ENCODE measurements at regions of chr16 and their contacts with region 1.

Region 1: GRCh38 chr16:31073968-31074813 is at the starts of genes ZNF646 and ZNF668:
- DNase-seq: peak; percentile 98
- H3K4me3 Mint-ChIP-seq: peak within 1 kb of the TSS; percentile 97
- H3K27ac Mint-ChIP-seq: peak within 1 kb of the TSS; percentile 97
- H3K4me1 Mint-ChIP-seq: peaks cover 24% of the 10 kb centered on the region
- H3K27me3 Mint-ChIP-seq: no peaks in the 10 kb centered on the region
- CTCF ChIP-seq: no peak
- total RNA-seq, gene ZNF646: 12.6 and 15.2 TPM in 2 replicates
- total RNA-seq, gene ZNF668: 11.9 and 15.1 TPM in 2 replicates

Region 2: DNA sequence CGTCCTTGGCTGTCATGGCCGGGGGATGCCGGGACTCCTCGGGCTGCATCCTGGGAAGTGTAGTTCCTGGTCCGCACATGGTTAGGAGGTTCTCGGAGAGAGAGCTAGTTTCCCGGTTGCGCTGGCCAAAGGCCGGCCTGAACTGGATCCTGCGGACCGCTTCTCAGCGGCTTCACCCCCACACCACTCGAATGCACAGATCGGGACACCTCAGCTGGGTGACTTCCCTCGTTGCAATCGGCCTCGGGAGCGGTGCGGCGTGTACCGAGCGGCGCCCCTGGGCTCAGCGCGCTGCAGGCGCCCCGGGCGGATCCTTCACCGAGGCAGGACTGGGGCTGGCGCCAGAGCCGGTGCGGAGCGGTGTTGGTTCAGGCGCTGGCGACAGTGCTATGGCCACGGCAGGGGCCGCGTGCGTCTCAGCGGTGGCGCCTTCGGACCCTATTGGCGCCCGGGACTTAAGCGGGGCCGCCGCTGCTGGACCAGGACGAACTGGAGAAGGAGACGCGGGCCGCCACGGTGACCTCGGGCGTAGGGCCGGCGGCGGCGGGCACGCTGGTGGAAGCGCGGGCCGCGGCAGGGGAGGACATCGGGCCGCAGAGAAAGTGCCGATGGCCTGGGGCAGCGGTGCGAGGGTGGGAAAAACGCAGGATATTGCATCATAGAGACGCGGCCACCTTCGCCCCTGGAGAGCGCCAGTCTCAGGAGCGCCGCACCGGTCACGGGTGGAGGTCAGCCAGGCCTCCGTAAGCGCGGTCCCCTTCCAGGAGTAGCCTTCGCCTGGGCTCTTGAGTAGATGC is 298.6 kb before region 1 on chr16:
- CTCF ChIA-PET with region 1: no interaction called
- POLR2A ChIA-PET with region 1: no interaction called
- intact Hi-C with region 1: no loop called
- DNase-seq: peak; percentile 87
- H3K4me3 Mint-ChIP-seq: peak overlapping the region; percentile 85
- H3K27ac Mint-ChIP-seq: peak overlapping the region; percentile 82
- H3K4me1 Mint-ChIP-seq: peaks cover 22% of the 10 kb centered on the region
- H3K27me3 Mint-ChIP-seq: no peaks in the 10 kb centered on the region
- CTCF ChIP-seq: no peak

Region 3: DNA sequence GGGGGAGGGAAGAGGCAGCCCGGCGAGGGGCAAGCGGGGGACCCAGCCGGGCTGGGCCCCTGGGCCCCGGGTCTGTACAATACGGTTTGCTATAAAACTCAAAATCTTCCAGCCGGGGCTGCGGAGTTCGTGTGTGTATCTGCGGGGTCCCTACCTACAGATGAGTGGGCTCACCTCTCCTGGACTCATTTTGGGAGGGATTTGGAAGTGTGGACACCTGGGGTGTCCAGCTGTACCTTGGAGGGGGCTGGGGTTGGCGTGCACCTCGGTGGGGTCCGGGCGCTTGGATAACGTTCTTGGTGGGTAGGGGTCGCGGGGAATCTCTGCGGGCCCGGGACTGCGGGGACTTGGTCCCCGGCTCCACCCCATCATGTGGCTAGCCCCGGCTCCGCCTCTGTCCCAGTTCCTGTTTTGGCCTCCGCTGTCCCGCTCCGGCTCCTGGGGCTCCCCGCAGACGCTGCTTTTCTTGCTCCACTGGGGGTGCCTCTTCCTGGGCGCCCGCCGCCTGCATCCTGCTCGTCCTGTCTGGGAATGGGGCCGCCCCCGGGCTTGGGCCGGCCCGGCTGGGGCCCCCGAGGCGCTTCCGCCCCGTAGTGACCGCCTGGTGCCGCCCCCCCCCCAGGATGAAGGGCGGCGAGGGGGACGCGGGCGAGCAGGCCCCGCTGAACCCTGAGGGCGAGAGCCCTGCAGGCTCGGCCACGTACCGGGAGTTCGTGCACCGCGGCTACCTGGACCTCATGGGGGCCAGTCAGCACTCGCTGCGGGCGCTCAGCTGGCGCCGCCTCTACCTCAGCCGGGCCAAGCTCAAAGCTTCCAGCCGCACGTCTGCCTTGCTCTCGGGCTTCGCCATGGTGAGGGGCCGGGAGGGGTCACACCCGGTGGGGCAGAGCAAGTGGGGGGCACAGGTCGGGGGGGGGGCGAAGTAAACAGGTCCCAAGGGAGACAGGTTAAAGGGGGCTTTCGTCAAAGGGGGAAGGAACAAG is 125.2 kb before region 1 on chr16 and contains the start of gene ORAI3:
- CTCF ChIA-PET with region 1: no interaction called
- POLR2A ChIA-PET with region 1: interaction called, 13 read pairs
- intact Hi-C with region 1: no loop called
- DNase-seq: peak; percentile 70
- H3K4me3 Mint-ChIP-seq: peak within 1 kb of the TSS; percentile 94
- H3K27ac Mint-ChIP-seq: peak within 1 kb of the TSS; percentile 87
- H3K4me1 Mint-ChIP-seq: no peaks in the 10 kb centered on the region
- H3K27me3 Mint-ChIP-seq: no peaks in the 10 kb centered on the region
- CTCF ChIP-seq: no peak
- total RNA-seq, gene ORAI3: 16.2 and 21.2 TPM in 2 replicates

Region 4: GRCh38 chr16:30997000-30997886 is 76.9 kb before region 1 on chr16:
- CTCF ChIA-PET with region 1: no interaction called
- POLR2A ChIA-PET with region 1: interaction called, 13 read pairs
- intact Hi-C with region 1: loop called (anchors 2 kb)
- DNase-seq: peak; percentile 79
- H3K4me3 Mint-ChIP-seq: peak overlapping the region; percentile 78
- H3K27ac Mint-ChIP-seq: peak overlapping the region; percentile 70
- H3K4me1 Mint-ChIP-seq: peaks cover 11% of the 10 kb centered on the region
- H3K27me3 Mint-ChIP-seq: no peaks in the 10 kb centered on the region
- CTCF ChIP-seq: no peak

Region 5: DNA sequence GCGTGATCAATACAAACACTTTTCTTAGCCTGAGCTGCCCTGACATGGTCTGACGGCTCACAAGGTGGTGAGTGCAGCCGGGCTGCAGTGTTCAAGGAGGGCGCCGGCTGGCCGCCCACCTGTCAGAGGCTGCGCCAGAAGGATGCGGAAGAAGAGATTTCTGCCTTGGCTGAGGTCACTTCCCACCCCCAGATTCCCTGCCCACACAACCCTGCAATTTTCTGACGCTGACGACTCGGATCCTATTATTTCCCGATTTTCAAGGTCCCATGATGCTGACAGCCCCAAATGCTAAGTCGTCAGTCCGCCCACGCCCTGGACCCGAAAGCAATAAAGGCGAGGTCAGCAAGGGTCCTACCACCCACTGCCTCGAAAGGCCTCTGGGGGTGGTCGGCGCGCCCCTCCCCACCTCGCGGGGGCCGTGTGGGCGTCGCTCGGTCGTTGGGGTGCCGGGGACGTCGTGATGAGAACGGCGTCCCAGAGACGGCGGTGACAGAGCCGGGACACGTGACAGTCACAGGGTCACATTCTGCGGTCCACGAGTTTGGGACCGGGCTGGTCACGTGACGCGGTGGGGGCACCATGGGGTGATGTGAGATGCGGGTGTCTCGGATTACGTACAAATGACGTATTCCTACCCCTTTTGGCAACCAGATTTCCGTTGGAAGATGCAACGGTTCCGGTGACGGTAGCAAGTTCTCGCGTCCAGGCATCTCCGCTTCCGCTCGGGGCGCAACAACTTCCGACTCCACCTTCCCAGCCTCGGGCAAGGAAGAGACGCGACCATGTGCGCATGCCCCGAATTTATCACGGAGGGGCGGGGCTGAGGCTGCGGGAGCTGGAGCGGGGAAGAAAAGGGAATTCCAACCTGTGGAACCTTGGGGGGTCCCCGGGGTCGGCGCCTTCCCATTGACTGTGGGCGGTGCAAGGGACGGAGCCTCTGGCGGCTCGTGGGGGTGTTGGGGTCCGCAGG is 41.2 kb before region 1 on chr16 and contains the start of gene STX4:
- CTCF ChIA-PET with region 1: no interaction called
- POLR2A ChIA-PET with region 1: interaction called, 52 read pairs
- intact Hi-C with region 1: loop called (anchors 1 kb)
- DNase-seq: peak; percentile 96
- H3K4me3 Mint-ChIP-seq: peak within 1 kb of the TSS; percentile 91
- H3K27ac Mint-ChIP-seq: peak within 1 kb of the TSS; percentile 84
- H3K4me1 Mint-ChIP-seq: no peaks in the 10 kb centered on the region
- H3K27me3 Mint-ChIP-seq: no peaks in the 10 kb centered on the region
- CTCF ChIP-seq: no peak
- total RNA-seq, gene STX4: 66.7 and 89.2 TPM in 2 replicates

Region 6: GRCh38 chr16:31052124-31052523 is 22.1 kb before region 1 on chr16:
- CTCF ChIA-PET with region 1: interaction called, 3 read pairs
- POLR2A ChIA-PET with region 1: interaction called, 12 read pairs
- intact Hi-C with region 1: loop called (anchors 1 kb)
- DNase-seq: peak; percentile 89
- H3K4me3 Mint-ChIP-seq: no peak overlapping the region
- H3K27ac Mint-ChIP-seq: peak overlapping the region; percentile 73
- H3K4me1 Mint-ChIP-seq: peaks cover 20% of the 10 kb centered on the region
- H3K27me3 Mint-ChIP-seq: no peaks in the 10 kb centered on the region
- CTCF ChIP-seq: no peak

Region 7: DNA sequence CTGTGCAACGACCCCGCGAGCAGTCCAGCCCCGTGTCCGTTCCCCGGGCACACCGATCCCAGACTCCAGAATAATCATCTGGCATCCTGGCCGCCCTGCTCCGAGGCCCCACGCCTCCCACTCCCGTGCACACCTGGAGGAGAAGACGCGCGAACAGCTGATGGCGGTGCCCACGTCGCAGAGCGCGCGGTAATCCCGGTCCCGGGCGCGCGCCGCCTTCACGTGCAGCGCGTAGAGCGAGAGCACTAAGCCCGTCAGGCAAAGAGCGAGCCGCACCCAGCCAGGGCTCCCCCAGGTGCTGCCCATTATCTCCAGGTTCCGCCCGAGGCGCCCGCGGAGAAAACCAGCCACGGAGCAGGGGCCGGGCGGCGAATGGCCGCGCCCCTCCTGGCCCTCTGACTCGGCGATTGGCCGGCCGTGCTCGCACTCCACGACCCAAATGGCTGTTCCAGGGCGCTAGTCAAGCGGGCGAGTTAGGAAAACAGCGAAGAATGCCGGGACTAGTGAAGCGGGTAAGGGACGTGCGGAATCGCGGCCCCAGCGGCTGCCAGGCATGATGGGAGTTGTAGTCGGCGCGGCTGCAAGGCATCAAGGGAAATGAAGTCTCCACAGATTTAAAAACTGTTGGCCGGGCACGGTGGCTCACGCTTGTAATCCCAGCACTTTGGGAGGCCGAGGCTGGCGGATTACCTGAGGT is 20.4 kb after region 1 on chr16 and contains the start of gene VKORC1:
- CTCF ChIA-PET with region 1: interaction called, 3 read pairs
- POLR2A ChIA-PET with region 1: interaction called, 78 read pairs
- intact Hi-C with region 1: loop called (anchors 2 kb)
- DNase-seq: peak; percentile 99
- H3K4me3 Mint-ChIP-seq: peak within 1 kb of the TSS; percentile 85
- H3K27ac Mint-ChIP-seq: peak within 1 kb of the TSS; percentile 77
- H3K4me1 Mint-ChIP-seq: peaks cover 12% of the 10 kb centered on the region
- H3K27me3 Mint-ChIP-seq: no peaks in the 10 kb centered on the region
- CTCF ChIP-seq: no peak
- total RNA-seq, gene VKORC1: 64.7 and 66.3 TPM in 2 replicates

Region 8: DNA sequence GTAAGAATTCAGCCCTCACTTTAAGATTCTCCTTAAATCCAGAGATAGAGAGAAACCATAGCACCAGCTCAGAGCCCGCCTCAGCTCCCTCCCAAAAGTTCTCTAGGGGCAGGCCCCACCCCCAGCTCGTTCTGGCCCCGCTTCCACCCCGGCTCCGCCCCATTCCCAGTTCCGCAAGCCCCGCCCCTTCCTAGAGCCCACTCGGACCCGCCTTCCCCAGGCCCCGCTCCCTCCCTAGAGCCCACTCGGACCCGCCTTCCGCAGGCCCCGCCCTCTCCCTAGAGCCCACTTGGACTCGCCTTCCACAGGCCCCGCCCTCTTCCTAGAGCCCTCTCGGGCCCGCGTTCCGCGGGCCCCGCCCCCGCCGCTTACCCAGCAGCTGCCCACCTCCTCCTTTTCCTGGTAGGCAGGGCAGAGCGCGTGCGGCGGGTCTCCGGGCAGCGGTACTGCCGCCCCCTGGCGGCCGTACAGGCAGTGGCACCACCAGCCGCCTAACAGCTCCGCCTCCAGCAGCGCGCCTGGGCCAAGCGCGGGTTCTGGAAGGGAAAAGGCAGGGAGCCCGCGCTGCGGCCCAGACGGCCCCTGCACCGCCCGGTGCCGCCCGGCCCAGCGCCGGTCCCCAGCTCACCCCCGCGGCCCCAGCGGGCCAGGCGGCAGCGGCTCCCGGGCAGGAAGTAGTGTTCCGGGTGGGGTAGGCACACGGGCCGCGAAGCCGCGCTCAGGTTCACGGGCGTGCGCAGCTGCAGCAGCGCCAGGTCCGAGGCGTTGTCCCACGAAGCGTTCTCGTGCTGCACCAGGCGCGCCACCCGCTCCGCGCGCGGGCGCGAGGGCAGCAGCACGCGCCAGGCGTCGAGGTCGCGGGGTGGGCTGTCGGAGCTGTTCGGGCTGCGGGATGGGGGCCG is 68.2 kb after region 1 on chr16:
- CTCF ChIA-PET with region 1: interaction called, 6 read pairs
- POLR2A ChIA-PET with region 1: interaction called, 30 read pairs
- intact Hi-C with region 1: loop called (anchors 1 kb)
- DNase-seq: peak; percentile 99
- H3K4me3 Mint-ChIP-seq: peak overlapping the region; percentile 71
- H3K27ac Mint-ChIP-seq: peak overlapping the region; percentile 91
- H3K4me1 Mint-ChIP-seq: peaks cover 21% of the 10 kb centered on the region
- H3K27me3 Mint-ChIP-seq: no peaks in the 10 kb centered on the region
- CTCF ChIP-seq: peak; percentile 90

Region 9: DNA sequence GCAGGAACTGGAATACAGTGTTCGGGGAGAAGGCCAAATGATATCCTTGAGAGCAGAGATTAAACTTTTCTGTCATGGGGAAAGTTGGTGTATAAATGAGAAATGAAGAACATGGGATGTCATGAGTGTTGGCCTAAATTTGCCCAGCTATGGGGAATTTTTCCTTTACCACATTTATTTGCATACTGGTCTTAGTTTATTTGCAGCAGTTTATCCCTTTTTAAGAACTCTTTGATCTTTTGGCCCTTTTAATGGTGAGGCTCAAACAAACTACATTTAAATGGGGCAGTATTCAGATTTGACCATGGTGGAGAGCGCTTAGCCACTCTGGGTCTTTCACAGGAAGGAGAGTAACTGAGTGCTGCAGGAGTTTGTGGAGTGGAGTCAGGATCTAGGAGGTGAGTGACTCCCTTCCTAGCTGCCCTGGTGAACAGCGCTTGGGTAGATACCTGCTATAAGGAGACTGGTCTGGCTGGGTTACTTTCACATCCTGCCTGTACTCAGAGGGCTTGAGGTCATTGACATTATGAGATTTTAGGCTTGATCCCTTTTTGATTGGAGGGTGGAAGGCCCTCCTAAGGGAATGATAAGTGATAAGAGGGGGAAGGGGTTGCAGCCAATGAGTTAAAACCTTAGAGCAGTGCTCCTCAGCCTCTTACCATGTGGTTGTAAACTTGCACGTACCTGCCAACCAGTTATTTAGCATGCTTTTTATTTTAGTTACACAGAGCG is 117.7 kb after region 1 on chr16:
- CTCF ChIA-PET with region 1: no interaction called
- POLR2A ChIA-PET with region 1: no interaction called
- intact Hi-C with region 1: no loop called
- DNase-seq: no peak
- H3K4me3 Mint-ChIP-seq: no peak overlapping the region
- H3K27ac Mint-ChIP-seq: no peak overlapping the region
- H3K4me1 Mint-ChIP-seq: no peaks in the 10 kb centered on the region
- H3K27me3 Mint-ChIP-seq: no peaks in the 10 kb centered on the region
- CTCF ChIP-seq: no peak

Measured in MCF 10A (cell line).